ENCODE measurements at regions of chr1 and their contacts with region 1.

Region 1: DNA sequence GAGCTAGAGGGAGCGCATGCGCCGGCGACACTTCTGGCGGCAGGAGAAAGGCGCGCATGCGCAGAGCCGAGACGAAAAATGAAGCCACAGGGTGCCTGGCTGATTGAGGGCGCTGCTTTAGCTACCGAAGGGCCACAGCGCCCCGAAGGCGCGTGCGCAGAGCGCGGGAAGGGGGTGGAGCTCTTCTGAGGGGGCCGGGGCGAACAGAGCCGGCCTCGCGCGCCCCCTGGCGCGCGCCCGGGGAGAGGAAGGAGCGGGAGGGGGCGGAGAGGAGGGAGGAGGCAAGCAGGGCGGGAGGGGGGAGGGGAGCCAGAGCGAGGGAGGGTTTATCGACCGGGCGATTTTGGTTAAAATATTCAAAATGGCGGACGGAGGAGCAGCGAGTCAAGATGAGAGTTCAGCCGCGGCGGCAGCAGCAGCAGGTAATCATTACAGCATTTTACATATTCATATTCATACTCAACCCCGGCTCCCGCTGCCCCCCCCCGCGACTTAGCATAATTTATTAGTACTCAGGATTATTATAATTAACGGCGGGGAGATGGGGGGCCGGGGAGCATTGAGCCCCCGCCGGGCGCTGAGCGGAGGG is at the start of gene POU2F1:
- DNase-seq: peak; percentile 99
- ATAC-seq: peak; percentile 82
- H3K4me3 Mint-ChIP-seq: peak within 1 kb of the TSS; percentile 96
- H3K27ac Mint-ChIP-seq: peak within 1 kb of the TSS; percentile 99
- H3K4me1 Mint-ChIP-seq: peaks cover 43% of the 10 kb centered on the region
- H3K27me3 Mint-ChIP-seq: no peaks in the 10 kb centered on the region
- total RNA-seq, gene POU2F1: 20.3 to 21.6 TPM

Region 2: DNA sequence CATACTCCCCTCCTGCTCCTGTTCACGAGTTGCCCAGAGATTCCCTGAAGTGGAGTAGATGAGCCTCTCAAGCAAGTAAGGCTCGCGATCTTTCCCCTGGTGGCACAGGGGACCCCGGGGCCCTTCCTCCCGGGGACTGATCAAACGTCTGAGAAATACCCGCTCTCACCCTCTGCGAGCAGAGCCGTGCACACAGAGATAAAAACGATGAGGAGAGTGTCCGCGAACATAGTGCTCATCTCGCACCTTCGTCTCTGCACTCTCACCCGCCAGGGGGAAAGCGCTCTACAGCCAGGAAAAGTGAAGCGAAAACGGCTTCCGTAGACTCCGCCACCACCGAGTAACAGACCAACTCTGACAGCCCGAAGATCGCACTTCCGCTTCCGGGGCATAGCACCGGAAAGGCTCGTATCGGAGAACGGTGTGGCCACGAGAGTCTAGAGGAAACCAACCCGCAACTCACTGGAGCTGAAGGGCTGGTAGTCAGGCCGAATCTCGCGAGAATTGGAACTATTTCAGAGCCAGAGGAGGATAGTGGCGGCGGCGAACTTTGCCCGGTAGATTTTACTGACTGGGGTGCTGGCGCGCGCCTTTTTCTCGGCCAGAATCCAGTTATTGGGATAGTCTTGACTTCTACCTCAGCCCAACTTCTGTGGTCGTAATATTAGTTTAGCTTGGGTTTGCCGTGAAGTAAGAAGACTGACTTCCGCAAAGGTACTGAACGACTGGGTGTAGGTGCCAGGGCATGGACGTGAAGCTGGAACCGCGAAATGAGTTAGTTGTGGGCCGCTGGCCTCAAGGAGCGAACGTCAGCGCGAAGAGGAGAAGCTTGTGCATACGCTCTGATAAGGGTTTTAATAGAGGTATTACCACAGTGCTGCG is 1451.9 kb before region 1 on chr1 and contains the start of gene TMCO1:
- CTCF ChIA-PET with region 1: no interaction called
- POLR2A ChIA-PET with region 1: no interaction called
- intact Hi-C with region 1: loop called in 1 of 2 experiments (anchors 5 kb)
- DNase-seq: peak; percentile 96
- ATAC-seq: peak; percentile 99
- H3K4me3 Mint-ChIP-seq: peak within 1 kb of the TSS; percentile 92
- H3K27ac Mint-ChIP-seq: peak within 1 kb of the TSS; percentile 99
- H3K4me1 Mint-ChIP-seq: peaks cover 54% of the 10 kb centered on the region
- H3K27me3 Mint-ChIP-seq: no peaks in the 10 kb centered on the region
- total RNA-seq, gene TMCO1: 57.7 to 70.5 TPM

Region 3: DNA sequence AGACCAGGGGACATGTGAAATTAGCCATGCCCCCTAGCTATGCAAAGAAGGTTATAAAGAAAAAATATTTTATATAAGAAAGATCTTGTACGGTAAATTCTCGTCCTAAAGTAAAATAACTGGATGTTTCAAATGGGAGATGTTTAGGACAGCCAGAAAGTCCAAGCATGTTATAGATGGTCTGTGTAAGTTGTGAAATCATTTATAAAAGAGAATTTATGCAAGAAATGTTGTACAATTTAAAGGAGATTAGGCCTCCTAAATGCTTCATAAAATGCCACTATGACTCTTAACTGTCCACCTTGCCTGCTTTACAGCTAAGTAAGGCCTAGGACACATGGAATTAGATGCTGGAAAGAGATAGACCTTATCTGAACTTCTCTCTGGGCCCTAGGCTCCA is 499.5 kb before region 1 on chr1:
- CTCF ChIA-PET with region 1: no interaction called
- POLR2A ChIA-PET with region 1: no interaction called
- intact Hi-C with region 1: no loop called
- DNase-seq: no peak
- ATAC-seq: no peak
- H3K4me3 Mint-ChIP-seq: no peak overlapping the region
- H3K27ac Mint-ChIP-seq: no peak overlapping the region
- H3K4me1 Mint-ChIP-seq: no peaks in the 10 kb centered on the region
- H3K27me3 Mint-ChIP-seq: peaks cover 4% of the 10 kb centered on the region

Region 4: GRCh38 chr1:166975361-166976129 is 245.1 kb before region 1 on chr1 and contains the start of gene ILDR2:
- CTCF ChIA-PET with region 1: no interaction called
- POLR2A ChIA-PET with region 1: no interaction called
- intact Hi-C with region 1: loop called (anchors 1 to 10 kb)
- DNase-seq: peak; percentile 87
- ATAC-seq: peak; percentile 60
- H3K4me3 Mint-ChIP-seq: peak within 1 kb of the TSS; percentile 93
- H3K27ac Mint-ChIP-seq: peak within 1 kb of the TSS; percentile 99
- H3K4me1 Mint-ChIP-seq: peaks cover 51% of the 10 kb centered on the region
- H3K27me3 Mint-ChIP-seq: peaks cover 21% of the 10 kb centered on the region
- total RNA-seq, gene ILDR2: 9.1 to 14.6 TPM

Region 5: DNA sequence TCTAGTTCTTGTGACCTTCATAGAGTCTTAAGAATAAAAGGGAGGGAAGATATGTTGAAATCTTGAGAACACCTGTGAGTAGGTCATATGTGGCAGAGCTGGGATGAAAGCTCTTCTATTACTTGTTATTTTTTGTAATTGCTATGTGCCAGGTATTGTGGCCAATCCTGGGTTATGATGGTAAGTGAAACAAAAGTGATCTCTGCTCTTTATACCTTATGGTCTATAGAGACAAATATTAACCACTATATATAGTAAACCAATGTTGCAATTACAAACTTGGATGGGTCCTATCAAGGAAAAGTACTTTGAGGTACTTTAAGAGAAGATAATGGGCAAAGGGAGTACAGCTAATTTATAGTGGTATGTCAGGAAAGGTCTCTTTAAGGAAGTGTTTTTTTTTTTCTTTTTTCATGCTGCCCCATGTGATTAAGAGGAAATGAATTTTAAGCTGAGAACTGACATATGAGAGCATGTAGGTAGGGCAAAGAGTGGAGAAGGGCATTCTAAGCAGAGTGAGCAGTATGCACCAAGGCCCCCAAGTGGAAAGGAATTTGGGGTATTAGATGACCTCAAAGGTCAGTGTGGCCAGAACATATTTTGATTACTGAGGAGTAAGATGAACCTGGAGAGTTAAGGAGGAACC is 43.3 kb after region 1 on chr1:
- CTCF ChIA-PET with region 1: interaction called, 9 read pairs
- POLR2A ChIA-PET with region 1: interaction called, 3 read pairs
- intact Hi-C with region 1: loop called (anchors 1 to 5 kb)
- DNase-seq: no peak
- ATAC-seq: peak; percentile 43
- H3K4me3 Mint-ChIP-seq: no peak overlapping the region
- H3K27ac Mint-ChIP-seq: no peak overlapping the region
- H3K4me1 Mint-ChIP-seq: peaks cover 28% of the 10 kb centered on the region
- H3K27me3 Mint-ChIP-seq: no peaks in the 10 kb centered on the region

Region 6: GRCh38 chr1:167517535-167518330 is 297.1 kb after region 1 on chr1:
- CTCF ChIA-PET with region 1: interaction called, 8 read pairs
- POLR2A ChIA-PET with region 1: interaction called, 13 read pairs
- intact Hi-C with region 1: loop called (anchors 1 to 5 kb)
- DNase-seq: peak; percentile 97
- ATAC-seq: peak; percentile 88
- H3K4me3 Mint-ChIP-seq: peak overlapping the region; percentile 90
- H3K27ac Mint-ChIP-seq: peak overlapping the region; percentile 99
- H3K4me1 Mint-ChIP-seq: peaks cover 43% of the 10 kb centered on the region
- H3K27me3 Mint-ChIP-seq: no peaks in the 10 kb centered on the region

Region 7: DNA sequence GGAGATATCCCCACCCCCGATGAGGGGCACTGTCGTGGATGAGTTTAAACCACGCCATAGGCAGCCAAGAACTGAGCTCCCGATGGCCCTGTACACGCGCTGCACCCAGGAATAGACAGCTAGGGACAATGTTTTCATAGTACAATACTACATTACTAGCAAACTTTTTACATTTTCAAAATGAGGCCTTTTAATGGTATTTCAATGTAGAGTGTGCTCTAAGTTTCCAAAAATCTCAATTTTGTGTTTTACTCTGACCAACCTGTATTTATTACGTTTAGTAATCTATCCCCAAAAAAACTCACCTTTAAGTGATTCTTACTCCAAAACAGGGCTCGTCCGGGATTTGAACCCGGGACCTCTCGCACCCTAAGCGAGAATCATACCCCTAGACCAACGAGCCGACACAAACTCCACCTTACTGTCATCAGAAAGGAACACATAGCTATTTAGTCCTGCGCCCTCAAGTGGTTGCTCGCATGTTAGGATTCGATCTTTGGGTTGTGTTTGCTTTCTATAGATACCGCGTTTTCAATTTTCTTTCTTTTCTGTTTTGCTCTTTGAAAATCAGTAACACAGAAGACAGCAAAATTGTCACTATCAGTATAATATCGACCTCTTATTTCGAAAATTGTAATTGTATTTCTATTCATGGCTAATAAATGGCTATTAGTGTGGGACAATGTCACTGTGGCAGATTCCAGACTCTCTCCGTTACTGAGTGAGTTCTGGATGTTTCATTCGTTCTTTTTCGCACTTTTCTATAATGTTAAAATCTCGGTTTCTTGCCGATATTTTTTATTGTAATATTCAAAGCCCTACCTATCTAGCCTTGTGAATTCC is 494.7 kb after region 1 on chr1:
- CTCF ChIA-PET with region 1: interaction called, 7 read pairs
- POLR2A ChIA-PET with region 1: no interaction called
- intact Hi-C with region 1: loop called in 1 of 2 experiments (anchors 1 kb)
- DNase-seq: peak; percentile 91
- ATAC-seq: peak; percentile 49
- H3K4me3 Mint-ChIP-seq: peak overlapping the region; percentile 83
- H3K27ac Mint-ChIP-seq: peak overlapping the region; percentile 91
- H3K4me1 Mint-ChIP-seq: peaks cover 37% of the 10 kb centered on the region
- H3K27me3 Mint-ChIP-seq: no peaks in the 10 kb centered on the region